Breast epithelium (tissue), 4 donors: ENCODE measurements at regions of chr2 and their contacts with region 1.

Region 1: DNA sequence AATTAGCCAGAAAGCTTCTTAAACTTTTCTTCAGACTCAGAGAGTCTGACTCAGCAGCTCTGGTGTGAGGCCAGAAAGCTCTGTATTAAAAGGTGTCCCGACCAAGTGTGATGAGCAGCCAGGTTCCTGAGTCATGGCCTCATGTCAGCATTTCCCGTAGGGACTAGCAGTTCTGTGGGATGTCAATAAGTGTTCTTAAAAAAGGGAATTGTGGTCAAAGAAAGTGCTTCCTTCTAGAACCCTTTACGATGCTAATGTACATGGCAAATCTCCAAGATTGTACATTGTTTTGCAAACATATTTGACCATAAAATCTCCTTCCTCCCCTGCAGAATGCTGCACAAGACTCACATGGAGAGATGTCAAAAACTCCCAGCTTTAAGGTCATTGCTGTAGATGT is 80.1 kb downstream of the PLA2R1 start:
- DNase-seq: peak in 1 of 2 donors; percentile 49
- H3K4me3 ChIP-seq: no peak overlapping the region
- H3K27ac ChIP-seq: peak overlapping the region; percentile 66 to 76
- H3K4me1 ChIP-seq: peaks cover 0 to 13% of the 10 kb centered on the region in 2 donors
- H3K27me3 ChIP-seq: no peaks in the 10 kb centered on the region
- CTCF ChIP-seq: no peak
- POLR2A ChIP-seq: no peak

Region 2: GRCh38 chr2:160109936-160110673 is 127.8 kb after region 1 on chr2:
- intact Hi-C with region 1: loop called (anchors 10 kb)
- DNase-seq: peak; percentile 56 to 59
- H3K4me3 ChIP-seq: no peak overlapping the region
- H3K27ac ChIP-seq: peak overlapping the region in 1 of 2 donors; percentile 45
- H3K4me1 ChIP-seq: no peaks in the 10 kb centered on the region
- H3K27me3 ChIP-seq: no peaks in the 10 kb centered on the region
- CTCF ChIP-seq: peak; percentile 51 to 86 (median 76)
- POLR2A ChIP-seq: no peak